ENCODE measurements at regions of chrX and their contacts with region 1.

Region 1: GRCh38 chrX:38192007-38192810 is 28.5 kb downstream of the SRPX start:
- DNase-seq: peak; percentile 37
- H3K4me3 ChIP-seq: no peak overlapping the region
- H3K27ac ChIP-seq: no peak overlapping the region
- H3K4me1 ChIP-seq: peaks cover 0 to 6% of the 10 kb centered on the region in 2 experiments; a peak in 1 of 4 replicates
- H3K27me3 ChIP-seq: no peaks in the 10 kb centered on the region
- CTCF ChIP-seq: peak; percentile 64
- EP300 ChIP-seq: no peak
- RAD21 ChIP-seq: peak; percentile 62

Region 2: DNA sequence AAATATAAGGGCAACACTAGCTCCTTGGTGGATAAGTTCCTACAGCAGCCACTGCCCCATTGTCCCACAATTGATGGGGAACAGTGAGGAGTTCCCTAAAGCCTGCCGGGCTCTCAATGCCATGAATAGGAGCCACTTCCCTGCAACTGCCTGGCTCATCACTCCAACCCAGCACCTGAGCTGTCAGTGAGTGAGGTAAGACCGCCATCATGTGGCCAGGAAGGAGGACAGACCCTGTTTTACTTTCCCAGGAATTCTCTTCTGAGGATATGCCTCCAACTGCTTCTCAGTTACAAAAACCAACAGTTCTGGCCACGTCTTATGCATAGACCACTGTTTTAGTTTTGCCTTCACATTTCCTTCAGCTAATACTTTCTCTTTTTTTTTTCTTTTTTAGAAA is 17.1 kb before region 1 on chrX:
- CTCF ChIA-PET with region 1: interaction called, 22 read pairs
- POLR2A ChIA-PET with region 1: no interaction called
- DNase-seq: peak; percentile 38
- H3K4me3 ChIP-seq: no peak overlapping the region
- H3K27ac ChIP-seq: no peak overlapping the region
- H3K4me1 ChIP-seq: no peaks in the 10 kb centered on the region
- H3K27me3 ChIP-seq: no peaks in the 10 kb centered on the region
- CTCF ChIP-seq: peak; percentile 64
- EP300 ChIP-seq: no peak
- RAD21 ChIP-seq: peak; percentile 80

Region 3: GRCh38 chrX:38327007-38327774 is 135.0 kb after region 1 on chrX and contains the start of gene RPGR:
- CTCF ChIA-PET with region 1: interaction called, 12 read pairs
- POLR2A ChIA-PET with region 1: no interaction called
- DNase-seq: peak; percentile 91
- H3K4me3 ChIP-seq: peak within 1 kb of the TSS; percentile 69 to 73
- H3K27ac ChIP-seq: peak within 1 kb of the TSS; percentile 56 to 96
- H3K4me1 ChIP-seq: peaks cover 0 to 3% of the 10 kb centered on the region in 2 experiments; a peak in 1 of 4 replicates
- H3K27me3 ChIP-seq: no peaks in the 10 kb centered on the region
- CTCF ChIP-seq: peak; percentile 71
- EP300 ChIP-seq: no peak
- RAD21 ChIP-seq: peak; percentile 64
- polyA plus RNA-seq, gene RPGR: 1.2 and 3.0 TPM in 2 replicates

Measured in SK-N-SH (cell line).